ENCODE measurements at regions of chr12 and their contacts with region 1.

Region 1: GRCh38 chr12:96061864-96062453 is 26.6 kb upstream of the LTA4H start:
- DNase-seq: peak; percentile 69 to 76
- H3K4me3 ChIP-seq: no peak overlapping the region
- H3K27ac ChIP-seq: peak overlapping the region in 1 of 2 donors; percentile 21
- H3K4me1 ChIP-seq: no peaks in the 10 kb centered on the region
- H3K27me3 ChIP-seq: no peaks in the 10 kb centered on the region
- CTCF ChIP-seq: peak; percentile 76 to 89 (median 86)
- POLR2A ChIP-seq: no peak

Region 2: DNA sequence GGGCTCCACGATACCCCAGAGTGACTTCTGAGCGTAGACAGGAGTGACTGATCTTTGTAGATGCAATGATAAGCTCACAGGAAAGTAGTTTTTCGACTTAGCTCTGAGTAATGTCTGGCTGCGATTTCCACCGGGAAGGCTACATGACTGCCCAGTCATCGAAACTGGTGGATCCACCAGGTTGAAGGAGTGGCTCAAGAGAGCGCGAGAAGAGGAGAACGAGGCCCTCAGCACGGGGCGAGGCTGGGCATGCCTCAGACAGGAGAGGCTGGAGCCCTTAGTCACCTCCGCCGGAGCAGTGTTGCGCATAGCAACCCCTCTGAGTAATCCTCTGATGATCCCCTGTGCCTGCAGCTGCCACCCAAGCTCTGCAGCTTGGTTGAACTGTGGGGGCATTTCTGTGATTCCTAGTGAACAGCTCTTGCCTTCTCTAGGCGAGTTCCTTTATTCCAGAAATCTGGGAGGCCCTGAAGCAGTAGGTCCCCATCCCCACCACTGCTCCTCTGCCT is 157.8 kb after region 1 on chr12:
- intact Hi-C with region 1: loop called (anchors 10 kb)
- DNase-seq: no peak
- H3K4me3 ChIP-seq: no peak overlapping the region
- H3K27ac ChIP-seq: peak overlapping the region in 1 of 2 donors; percentile 30
- H3K4me1 ChIP-seq: peaks cover 0 to 6% of the 10 kb centered on the region in 2 donors
- H3K27me3 ChIP-seq: no peaks in the 10 kb centered on the region
- CTCF ChIP-seq: no peak
- POLR2A ChIP-seq: no peak

Region 3: DNA sequence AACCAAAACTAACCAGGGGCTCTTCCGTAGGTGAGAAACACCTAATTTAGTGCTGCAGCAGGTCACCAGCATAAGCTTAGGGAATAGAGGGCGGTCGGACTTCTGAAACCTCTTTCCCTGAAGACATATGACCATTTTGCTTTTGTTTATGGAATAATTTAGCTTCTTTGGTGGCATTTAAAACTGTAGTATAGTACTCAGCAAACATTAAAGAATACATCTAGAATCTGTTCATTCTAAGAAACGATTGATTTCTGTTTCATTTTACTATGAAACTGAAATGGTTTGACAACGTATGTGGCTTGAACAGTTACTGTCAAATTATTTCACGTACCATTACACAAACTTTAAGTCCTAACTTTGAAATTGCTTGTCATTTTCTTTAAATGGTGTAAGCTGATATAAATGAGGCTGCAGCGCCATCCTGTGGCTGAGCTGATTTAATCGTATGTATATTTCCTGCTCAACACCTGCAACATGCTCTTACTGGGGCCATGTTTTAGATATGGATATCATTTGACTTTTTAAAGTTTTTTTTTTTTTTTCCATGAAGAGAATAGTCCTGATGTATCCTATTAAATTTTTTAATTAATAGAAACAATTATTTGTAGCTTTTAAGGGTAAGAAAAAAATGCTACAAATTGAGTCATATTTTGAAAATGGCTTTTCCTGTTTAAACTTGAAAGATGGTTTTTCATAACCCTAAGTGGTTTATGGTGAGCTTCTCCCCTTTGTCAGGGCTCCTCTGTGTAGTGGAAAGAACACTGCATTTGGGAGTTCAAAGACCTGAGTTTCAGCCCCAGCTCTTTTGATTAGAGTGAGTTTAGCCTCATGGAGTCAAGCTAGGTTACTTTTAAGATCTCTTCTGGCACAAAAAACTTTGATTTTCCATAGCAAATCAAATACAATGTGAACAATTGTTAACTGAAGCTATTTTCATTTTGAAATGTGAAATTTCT is 454.8 kb after region 1 on chr12:
- intact Hi-C with region 1: loop called (anchors 10 kb)
- DNase-seq: peak; percentile 67 to 81
- H3K4me3 ChIP-seq: no peak overlapping the region
- H3K27ac ChIP-seq: no peak overlapping the region
- H3K4me1 ChIP-seq: no peaks in the 10 kb centered on the region
- H3K27me3 ChIP-seq: no peaks in the 10 kb centered on the region
- CTCF ChIP-seq: peak; percentile 46 to 80 (median 74)
- POLR2A ChIP-seq: no peak

Measured in uterus (tissue), 4 donors.